ENCODE measurements at regions of chr11 and their contacts with region 1.

Region 1: DNA sequence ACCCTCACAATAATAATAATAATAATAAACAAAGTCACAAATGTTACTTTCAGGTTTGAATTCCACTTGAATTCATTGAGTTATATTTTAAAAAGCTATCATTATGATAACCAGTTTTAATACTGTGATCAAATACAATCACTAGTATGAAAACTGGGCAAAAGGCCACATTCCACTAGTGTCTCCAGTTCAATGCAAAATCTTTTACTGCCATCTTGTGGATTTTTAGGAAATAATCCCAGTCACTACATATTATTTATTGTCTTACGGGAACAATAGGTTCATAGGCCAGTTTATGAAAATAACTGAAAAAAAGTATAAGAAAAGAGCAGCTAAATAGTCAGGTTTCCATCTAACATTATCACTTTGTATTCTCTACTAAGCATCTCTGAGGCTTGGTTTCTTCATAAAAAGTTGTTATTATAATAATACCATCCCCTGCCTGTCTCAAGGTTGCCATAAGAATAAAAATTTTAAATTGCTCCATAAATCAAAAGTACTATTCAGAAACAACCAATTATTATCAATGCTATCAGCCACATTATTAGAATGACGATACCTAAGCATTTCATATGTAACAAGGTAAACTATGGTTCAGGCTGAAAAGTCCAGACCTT is 533.9 kb upstream of the CCDC90B start:
- DNase-seq: peak; percentile 64
- H3K27ac ChIP-seq: no peak overlapping the region
- CTCF ChIP-seq: peak; percentile 69

Region 2: GRCh38 chr11:83292709-83293456 is 527.2 kb before region 1 on chr11:
- CTCF ChIA-PET with region 1: interaction called, 13 read pairs
- POLR2A ChIA-PET with region 1: no interaction called
- DNase-seq: peak; percentile 66
- H3K27ac ChIP-seq: no peak overlapping the region
- CTCF ChIP-seq: peak; percentile 73

Region 3: GRCh38 chr11:83801780-83802179 is 18.3 kb before region 1 on chr11:
- CTCF ChIA-PET with region 1: no interaction called
- POLR2A ChIA-PET with region 1: no interaction called
- DNase-seq: no peak
- H3K27ac ChIP-seq: no peak overlapping the region
- CTCF ChIP-seq: no peak

Region 4: DNA sequence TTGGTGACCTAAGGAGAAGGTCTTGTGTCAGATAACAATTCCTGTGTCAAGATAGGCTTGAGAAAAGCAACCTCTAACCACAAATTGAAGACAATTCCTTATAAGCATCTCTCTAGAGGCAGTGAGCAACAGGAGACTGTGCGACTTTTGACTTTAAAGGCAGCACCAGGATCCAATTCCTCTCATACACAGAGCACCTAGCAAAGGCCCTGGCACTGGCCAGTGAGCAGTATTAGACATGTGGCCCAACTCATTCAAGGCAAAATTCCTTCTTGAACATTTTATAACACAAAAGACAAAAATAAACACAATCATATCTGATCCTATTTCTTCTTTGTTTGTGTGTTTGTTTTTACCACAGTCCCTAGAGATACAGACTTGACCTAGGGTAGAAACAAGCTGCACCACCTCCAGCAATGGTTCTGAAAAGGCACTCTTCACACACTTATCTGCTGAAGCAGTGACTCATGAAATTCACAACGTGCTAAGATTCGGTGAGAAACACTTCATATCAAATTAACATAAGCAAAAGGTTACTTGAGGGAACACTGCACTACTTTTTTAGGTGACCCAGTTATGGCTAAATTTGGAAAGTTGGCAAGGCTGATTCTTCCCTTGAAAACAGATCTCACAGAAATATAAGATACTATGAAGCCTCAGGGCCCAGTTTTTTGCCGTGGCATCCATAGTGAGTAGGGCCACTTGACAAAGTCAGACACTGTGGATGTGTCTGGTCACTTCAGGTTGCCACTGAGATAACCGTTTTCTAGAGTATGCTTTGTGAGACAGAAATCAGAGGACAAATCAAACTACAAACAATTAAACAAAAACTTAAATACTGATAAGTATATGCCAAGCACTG is 788.2 kb after region 1 on chr11:
- CTCF ChIA-PET with region 1: no interaction called
- POLR2A ChIA-PET with region 1: no interaction called
- DNase-seq: no peak
- H3K27ac ChIP-seq: no peak overlapping the region
- CTCF ChIP-seq: no peak